Activated B cell treated with CpG ODN at 0.5 μM for 24 hours (primary cell): ENCODE measurements at regions of chr19 and their contacts with region 1.

Region 1: GRCh38 chr19:50835785-50836542 is 2.6 kb upstream of the KLK15 start:
- DNase-seq: peak; percentile 80
- ATAC-seq: peak; percentile 94
- H3K4me3 Mint-ChIP-seq: peak overlapping the region; percentile 83
- H3K27ac Mint-ChIP-seq: peak overlapping the region; percentile 20
- H3K4me1 Mint-ChIP-seq: peaks cover 27% of the 10 kb centered on the region
- H3K27me3 Mint-ChIP-seq: peaks cover 36% of the 10 kb centered on the region
- CTCF ChIP-seq: no peak

Region 2: GRCh38 chr19:50431343-50432220 is 404.4 kb before region 1 on chr19:
- CTCF ChIA-PET with region 1: no interaction called
- POLR2A ChIA-PET with region 1: no interaction called
- intact Hi-C with region 1: no loop called
- DNase-seq: peak; percentile 91
- ATAC-seq: peak; percentile 64
- H3K4me3 Mint-ChIP-seq: peak overlapping the region; percentile 89
- H3K27ac Mint-ChIP-seq: peak overlapping the region; percentile 95
- H3K4me1 Mint-ChIP-seq: peaks cover 95% of the 10 kb centered on the region
- H3K27me3 Mint-ChIP-seq: no peaks in the 10 kb centered on the region
- CTCF ChIP-seq: no peak

Region 3: GRCh38 chr19:50896591-50897190 is 60.7 kb after region 1 on chr19:
- CTCF ChIA-PET with region 1: no interaction called
- POLR2A ChIA-PET with region 1: no interaction called
- intact Hi-C with region 1: loop called (anchors 5 kb)
- DNase-seq: peak; percentile 58
- ATAC-seq: peak; percentile 91
- H3K4me3 Mint-ChIP-seq: peak overlapping the region; percentile 24
- H3K27ac Mint-ChIP-seq: peak overlapping the region; percentile 85
- H3K4me1 Mint-ChIP-seq: peaks cover 51% of the 10 kb centered on the region
- H3K27me3 Mint-ChIP-seq: no peaks in the 10 kb centered on the region
- CTCF ChIP-seq: no peak